Mammary epithelial cell (primary cell): ENCODE measurements at regions of chr10 and their contacts with region 1.

Region 1: DNA sequence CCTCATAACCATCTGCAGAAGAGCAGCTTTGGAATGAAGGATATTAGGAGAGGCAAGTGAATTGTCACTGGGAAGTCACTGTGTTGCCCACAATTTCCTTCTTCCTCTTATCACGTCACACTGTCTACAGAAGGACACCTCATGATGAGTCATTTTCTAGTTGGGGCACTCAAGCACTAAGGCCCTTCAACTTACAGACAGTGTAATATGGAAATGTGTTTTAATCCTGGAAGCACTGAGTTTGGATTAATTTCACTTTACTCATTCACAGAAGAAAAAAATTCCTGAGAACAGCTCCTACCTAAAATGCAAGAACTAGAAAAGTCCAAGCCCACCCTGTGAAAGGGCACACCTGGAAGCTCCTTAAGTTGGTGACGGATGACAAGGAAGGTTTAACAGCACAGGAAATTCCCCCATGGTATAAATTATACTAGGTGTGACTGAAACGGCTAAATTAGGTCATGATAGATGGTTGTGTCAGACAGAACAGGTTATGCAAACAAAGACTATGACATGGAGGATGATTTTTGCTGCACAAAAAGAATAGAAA is 56.6 kb downstream of the PARD3 start:
- DNase-seq: peak; percentile 92
- H3K4me3 ChIP-seq: no peak overlapping the region
- H3K27ac ChIP-seq: peak overlapping the region; percentile 96
- H3K4me1 ChIP-seq: peaks cover 51% of the 10 kb centered on the region
- H3K27me3 ChIP-seq: no peaks in the 10 kb centered on the region
- CTCF ChIP-seq: no peak

Region 2: GRCh38 chr10:34696423-34696822 is 62.1 kb before region 1 on chr10:
- CTCF ChIA-PET with region 1: no interaction called
- dilution Hi-C with region 1: no loop called
- in situ Hi-C with region 1: no loop called
- intact Hi-C with region 1: no loop called
- DNase-seq: peak; percentile 81
- H3K4me3 ChIP-seq: no peak overlapping the region
- H3K27ac ChIP-seq: no peak overlapping the region
- H3K4me1 ChIP-seq: peaks cover 58% of the 10 kb centered on the region
- H3K27me3 ChIP-seq: no peaks in the 10 kb centered on the region
- CTCF ChIP-seq: no peak

Region 3: DNA sequence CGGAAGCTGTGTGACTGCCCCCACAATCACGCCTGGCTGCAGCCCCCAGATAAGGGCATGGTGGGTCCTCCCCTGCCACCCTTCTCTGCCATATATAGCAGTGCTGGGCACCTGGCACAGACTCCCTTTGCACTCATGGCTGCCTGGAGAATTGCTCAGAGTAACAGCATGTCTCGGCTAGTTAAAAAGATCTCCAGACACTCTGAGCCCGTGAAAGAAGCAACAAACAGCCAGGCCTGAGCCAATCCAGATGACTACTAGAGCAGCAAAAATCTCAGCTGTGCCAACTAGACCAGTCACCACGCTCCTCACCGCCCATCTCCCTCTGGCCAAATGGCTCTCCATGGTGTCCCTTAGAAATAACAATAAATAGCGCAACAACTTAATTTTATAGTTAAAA is 14.7 kb before region 1 on chr10:
- CTCF ChIA-PET with region 1: no interaction called
- dilution Hi-C with region 1: no loop called
- in situ Hi-C with region 1: no loop called
- intact Hi-C with region 1: loop called (anchors 1 kb)
- DNase-seq: peak; percentile 93
- H3K4me3 ChIP-seq: no peak overlapping the region
- H3K27ac ChIP-seq: peak overlapping the region; percentile 67
- H3K4me1 ChIP-seq: peaks cover 66% of the 10 kb centered on the region
- H3K27me3 ChIP-seq: no peaks in the 10 kb centered on the region
- CTCF ChIP-seq: no peak

Region 4: DNA sequence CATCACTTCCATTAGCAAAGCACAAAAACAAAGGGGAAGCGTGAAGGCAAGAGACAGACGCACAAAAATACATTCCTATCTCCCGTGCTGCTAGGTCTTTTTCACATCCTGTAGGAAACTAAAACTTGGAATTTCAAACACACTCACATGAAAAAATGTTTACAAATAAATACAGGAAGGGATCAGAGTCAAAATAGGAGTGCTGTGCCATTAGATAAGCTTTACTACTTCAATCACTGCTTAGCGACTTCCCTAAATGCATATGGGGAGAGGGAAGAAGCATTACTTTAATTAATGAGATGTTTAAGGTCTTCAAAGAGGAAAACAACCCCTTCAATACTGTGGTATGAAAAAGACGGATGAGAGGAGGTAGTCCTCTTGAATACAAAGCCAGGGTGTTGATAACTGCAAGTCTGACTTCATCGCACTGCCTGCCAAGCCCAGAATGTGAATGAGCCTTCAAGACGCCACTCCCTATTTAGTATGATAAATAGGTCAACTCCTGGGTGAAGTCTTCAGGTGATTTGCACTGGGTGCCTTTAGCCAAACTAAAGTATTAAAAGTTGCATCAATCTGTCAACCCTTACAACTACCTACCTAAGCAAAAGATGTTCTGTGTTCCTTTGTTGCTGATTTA is 42.7 kb after region 1 on chr10:
- CTCF ChIA-PET with region 1: no interaction called
- dilution Hi-C with region 1: loop called (anchors 5 kb)
- in situ Hi-C with region 1: no loop called
- intact Hi-C with region 1: no loop called
- DNase-seq: peak; percentile 29
- H3K4me3 ChIP-seq: no peak overlapping the region
- H3K27ac ChIP-seq: no peak overlapping the region
- H3K4me1 ChIP-seq: peaks cover 8% of the 10 kb centered on the region
- H3K27me3 ChIP-seq: no peaks in the 10 kb centered on the region
- CTCF ChIP-seq: no peak